ENCODE measurements at regions of chr20 and their contacts with region 1.

Region 1: DNA sequence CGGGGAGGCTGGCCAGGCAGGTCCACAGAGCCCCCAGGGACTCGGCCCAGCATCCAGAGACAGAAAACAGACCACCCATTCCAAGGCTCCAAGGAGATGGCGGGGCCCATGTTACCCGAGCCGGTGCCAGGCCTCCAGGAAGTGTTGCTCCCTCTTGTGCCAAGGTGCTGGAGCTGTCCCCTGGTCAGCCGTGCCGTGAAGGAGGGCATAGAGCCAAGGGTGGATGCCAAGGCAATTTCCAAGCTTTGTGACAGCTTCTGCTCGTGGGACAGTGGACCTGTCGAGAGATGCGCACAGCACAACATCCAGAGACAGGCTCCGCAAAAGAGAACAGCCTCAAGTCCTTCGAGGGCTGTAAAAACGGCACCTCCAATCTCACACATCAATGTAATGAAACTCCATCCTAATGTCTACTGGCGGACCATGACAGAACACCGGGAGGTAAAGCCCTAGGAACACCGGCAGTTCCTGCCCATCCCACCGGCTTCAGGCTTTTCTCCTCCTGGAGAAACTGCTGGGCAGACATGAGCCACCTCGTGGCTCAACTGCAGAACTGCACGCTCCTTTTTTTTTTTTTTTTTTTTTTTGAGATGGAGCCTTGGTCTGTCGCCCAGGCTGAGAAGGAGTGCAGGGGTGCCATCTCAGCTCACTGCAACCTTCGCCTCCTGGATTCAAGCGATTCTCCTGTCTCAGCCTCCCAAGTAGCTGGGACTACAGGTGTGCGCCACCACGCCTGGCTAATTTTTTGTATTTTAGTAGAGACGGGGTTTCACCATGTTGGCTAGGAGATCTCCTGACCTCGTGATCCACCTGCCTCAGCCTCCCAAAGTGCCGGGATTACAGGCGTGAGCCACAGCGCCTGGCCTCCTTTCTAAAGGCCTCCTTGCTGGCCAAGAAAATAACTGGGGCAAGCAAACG is 30.9 kb upstream of the AVP start:
- DNase-seq: peak; percentile 51 to 58 (median 58)
- H3K4me3 ChIP-seq: peak overlapping the region in 2 of 7 experiments; percentile 20 to 48
- H3K27ac ChIP-seq: no peak overlapping the region
- H3K4me1 ChIP-seq: peaks cover 2 to 47% (median 24%) of the 10 kb centered on the region in 4 experiments
- H3K27me3 ChIP-seq: no peaks in the 10 kb centered on the region

Region 2: GRCh38 chr20:3051385-3052019 is 63.9 kb before region 1 on chr20:
- CTCF ChIA-PET with region 1: interaction called, 11 read pairs
- POLR2A ChIA-PET with region 1: interaction called, 3 read pairs
- DNase-seq: peak in 2 of 3 donors; percentile 56 to 65
- H3K4me3 ChIP-seq: no peak overlapping the region
- H3K27ac ChIP-seq: no peak overlapping the region
- H3K4me1 ChIP-seq: peaks cover 0 to 15% (median 10%) of the 10 kb centered on the region in 4 experiments
- H3K27me3 ChIP-seq: no peaks in the 10 kb centered on the region

Region 3: DNA sequence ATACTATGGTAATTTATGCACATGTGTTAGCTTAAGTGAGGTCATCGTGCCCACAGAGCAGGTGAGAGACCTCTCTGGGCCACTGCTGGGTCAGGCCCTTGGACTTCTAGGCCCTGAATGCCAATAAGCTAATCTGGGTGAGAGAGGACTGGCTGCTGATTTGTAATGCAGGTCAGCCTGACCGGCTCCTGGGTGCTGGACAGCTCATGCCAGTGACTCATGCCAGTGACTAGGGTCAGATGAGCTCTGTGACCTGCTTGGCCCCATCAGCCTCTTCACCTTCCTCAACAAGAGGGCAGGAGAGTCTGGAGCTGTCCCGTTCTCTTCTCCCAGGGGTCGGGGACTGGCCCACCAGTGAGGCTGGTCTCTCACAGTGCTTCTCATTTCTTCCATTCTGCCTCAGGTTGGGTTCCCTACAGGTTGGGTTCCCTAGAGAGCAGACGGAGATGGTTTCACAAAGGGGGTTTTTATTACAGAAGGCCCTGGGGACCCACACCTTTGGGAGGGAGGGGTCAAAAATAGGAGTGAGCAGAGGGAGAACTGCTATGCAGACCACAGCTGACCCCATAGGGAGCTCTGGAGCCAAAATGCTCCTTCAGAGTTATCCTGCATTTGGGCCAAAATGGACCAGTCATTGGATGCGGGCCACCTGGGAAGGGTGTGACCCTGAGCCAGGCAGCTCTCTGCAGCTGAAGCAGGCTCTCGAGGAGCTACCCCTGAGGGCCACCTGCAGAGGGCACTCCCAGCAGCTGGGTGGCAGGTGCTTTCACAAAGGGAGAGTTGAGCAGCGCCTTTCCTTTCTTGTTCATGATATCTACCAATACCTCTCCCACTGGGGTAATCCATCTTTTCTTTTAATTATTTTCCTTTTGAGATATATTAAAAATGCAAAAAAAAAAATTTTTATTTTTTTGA is 46.2 kb before region 1 on chr20:
- CTCF ChIA-PET with region 1: interaction called, 64 read pairs
- POLR2A ChIA-PET with region 1: no interaction called
- DNase-seq: peak in 2 of 3 donors; percentile 56 to 59
- H3K4me3 ChIP-seq: no peak overlapping the region
- H3K27ac ChIP-seq: no peak overlapping the region
- H3K4me1 ChIP-seq: peaks cover 0 to 36% (median 23%) of the 10 kb centered on the region in 4 experiments
- H3K27me3 ChIP-seq: no peaks in the 10 kb centered on the region

Region 4: DNA sequence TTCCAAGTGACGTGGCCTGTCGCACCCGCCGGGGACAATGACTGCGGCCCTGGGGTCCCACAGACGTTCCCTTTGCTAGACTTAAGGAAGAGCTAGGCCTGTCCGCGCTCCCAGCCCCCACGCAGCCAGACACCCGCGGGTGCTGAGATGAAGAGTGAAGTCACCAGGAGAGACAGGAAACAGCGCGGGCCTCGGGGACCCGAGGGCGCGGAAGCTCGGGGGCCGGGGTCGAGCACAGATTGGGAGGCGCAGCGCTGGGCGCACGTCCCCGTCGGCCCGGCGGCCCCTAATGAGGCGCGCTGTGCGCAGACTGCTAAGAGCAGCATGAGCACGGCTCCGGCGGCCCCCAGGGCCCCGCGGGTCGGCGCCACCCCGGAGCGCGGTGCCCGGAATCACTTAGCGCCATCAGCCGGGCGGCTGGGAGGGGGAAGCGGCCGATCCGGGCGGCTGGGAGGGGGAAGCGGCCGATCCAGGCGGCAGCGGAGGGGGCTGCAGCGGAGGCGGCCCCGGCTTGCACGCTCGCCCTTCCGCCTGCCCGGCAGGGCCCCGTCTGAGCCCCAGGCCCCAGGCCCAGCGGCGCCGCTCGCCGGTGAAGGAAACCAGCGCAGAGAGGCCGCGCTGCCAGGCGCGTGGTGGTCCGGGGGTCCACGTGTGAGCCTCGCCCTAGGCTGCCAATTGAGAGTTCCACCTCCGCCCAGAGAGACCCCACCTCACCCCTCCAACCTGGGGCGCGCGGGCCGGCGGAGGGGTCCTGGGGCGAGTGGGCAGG is 22.7 kb before region 1 on chr20:
- CTCF ChIA-PET with region 1: interaction called, 71 read pairs
- POLR2A ChIA-PET with region 1: interaction called, 3 read pairs
- DNase-seq: peak in 2 of 3 donors; percentile 66 to 78
- H3K4me3 ChIP-seq: peak overlapping the region in 6 of 7 experiments; percentile 12 to 70 (median 57)
- H3K27ac ChIP-seq: peak overlapping the region; percentile 77 to 79
- H3K4me1 ChIP-seq: peaks cover 10 to 65% (median 60%) of the 10 kb centered on the region in 4 experiments
- H3K27me3 ChIP-seq: no peaks in the 10 kb centered on the region

Region 5: DNA sequence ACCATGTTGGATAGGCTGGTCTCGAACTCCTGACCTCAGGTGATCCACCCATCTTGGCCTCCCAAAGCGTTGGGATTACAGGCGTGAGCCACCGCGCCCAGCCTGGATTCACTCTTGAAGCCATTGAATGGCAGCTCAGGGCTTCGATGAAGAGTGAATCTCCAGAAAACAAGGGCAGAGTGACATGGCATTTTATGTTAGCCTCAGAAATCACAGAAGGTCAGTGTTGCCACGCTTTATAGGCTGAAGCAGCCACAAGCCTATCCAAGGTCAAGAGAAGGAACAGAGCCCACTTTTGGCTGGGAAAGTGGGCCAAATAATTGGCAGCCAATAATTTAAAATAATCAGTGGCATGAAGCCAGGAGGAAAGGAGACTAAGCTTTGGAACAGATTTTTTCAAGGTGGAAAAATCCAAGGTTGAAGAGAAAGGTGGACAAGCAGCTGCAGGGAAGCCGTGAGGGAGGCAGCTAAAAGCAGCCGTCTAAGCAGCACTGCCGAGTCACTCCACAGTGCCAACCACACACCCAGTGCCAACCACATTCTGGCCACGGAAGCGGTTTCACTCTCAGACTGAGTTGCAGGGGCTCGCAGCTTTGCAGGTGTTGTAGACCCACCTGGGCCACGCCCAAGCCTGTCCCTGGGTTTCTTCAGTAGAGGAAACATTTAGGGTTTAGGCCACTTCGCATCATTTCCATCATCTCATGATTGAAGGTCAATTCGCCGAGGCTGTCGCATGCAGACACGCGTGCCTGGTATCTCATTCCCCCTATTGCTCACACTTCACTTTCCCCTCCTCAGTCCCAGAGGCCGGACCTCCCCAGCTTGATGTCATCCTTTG is 13.5 kb before region 1 on chr20:
- CTCF ChIA-PET with region 1: interaction called, 71 read pairs
- POLR2A ChIA-PET with region 1: interaction called, 3 read pairs
- DNase-seq: peak; percentile 69 to 93 (median 91)
- H3K4me3 ChIP-seq: peak overlapping the region in 3 of 7 experiments; percentile 15 to 45 (median 28)
- H3K27ac ChIP-seq: no peak overlapping the region
- H3K4me1 ChIP-seq: peaks cover 3 to 54% (median 42%) of the 10 kb centered on the region in 4 experiments
- H3K27me3 ChIP-seq: no peaks in the 10 kb centered on the region

Region 6: GRCh38 chr20:3156811-3157619 is 41.6 kb after region 1 on chr20:
- CTCF ChIA-PET with region 1: interaction called, 11 read pairs
- POLR2A ChIA-PET with region 1: interaction called, 4 read pairs
- DNase-seq: peak in 2 of 3 donors; percentile 79 to 81
- H3K4me3 ChIP-seq: peak overlapping the region in 6 of 7 experiments; percentile 2 to 96 (median 20)
- H3K27ac ChIP-seq: peak overlapping the region; percentile 41 to 97
- H3K4me1 ChIP-seq: peaks cover 11 to 34% (median 25%) of the 10 kb centered on the region in 4 experiments
- H3K27me3 ChIP-seq: no peaks in the 10 kb centered on the region

Region 7: GRCh38 chr20:3262566-3262965 is 147.1 kb after region 1 on chr20:
- CTCF ChIA-PET with region 1: no interaction called
- POLR2A ChIA-PET with region 1: no interaction called
- DNase-seq: no peak
- H3K4me3 ChIP-seq: no peak overlapping the region
- H3K27ac ChIP-seq: no peak overlapping the region
- H3K4me1 ChIP-seq: no peaks in the 10 kb centered on the region
- H3K27me3 ChIP-seq: no peaks in the 10 kb centered on the region